ENCODE measurements at regions of chr22 and their contacts with region 1.

Region 1: DNA sequence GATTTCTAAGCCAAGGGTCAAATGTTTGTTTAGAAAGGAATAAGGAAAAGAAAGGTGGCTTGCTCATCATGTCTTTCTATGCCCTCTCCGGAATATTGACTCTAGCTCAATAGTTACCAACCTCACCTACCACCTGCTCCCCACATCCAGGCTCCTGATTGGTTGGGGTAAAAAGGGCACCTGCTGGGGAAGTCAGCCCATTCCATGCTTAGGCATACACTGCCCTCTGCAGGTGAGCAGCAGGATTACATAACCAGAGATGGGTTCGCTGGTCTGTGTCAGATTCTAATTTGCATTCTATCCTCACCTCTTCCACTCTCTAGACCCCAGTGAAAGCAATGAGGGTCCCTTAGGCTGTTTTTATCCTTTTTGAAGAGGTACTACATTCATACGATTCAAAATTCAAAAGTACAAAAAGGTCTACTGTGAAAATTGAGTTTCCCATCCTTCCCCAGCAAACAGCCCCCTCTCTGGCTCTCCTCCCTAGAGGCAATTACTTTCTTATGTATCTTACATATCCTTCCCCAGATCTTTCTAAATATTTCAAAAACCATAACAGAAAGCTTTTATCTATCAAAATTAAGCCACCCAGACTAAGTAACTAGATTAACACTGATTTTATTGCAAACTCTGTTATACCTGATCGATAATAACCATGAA is 98.0 kb upstream of the ASPHD2 start:
- DNase-seq: peak; percentile 81
- H3K4me3 ChIP-seq: no peak overlapping the region; a peak in 1 of 4 replicates
- H3K27ac ChIP-seq: no peak overlapping the region
- H3K4me1 ChIP-seq: peaks cover 0 to 3% of the 10 kb centered on the region in 2 experiments; a peak in 1 of 4 replicates
- H3K27me3 ChIP-seq: no peaks in the 10 kb centered on the region
- CTCF ChIP-seq: peak; percentile 85
- EP300 ChIP-seq: no peak
- RAD21 ChIP-seq: peak; percentile 96

Region 2: GRCh38 chr22:25896098-25896497 is 435.0 kb before region 1 on chr22:
- CTCF ChIA-PET with region 1: interaction called, 15 read pairs
- POLR2A ChIA-PET with region 1: no interaction called
- DNase-seq: no peak
- H3K4me3 ChIP-seq: no peak overlapping the region
- H3K27ac ChIP-seq: no peak overlapping the region
- H3K4me1 ChIP-seq: no peaks in the 10 kb centered on the region
- H3K27me3 ChIP-seq: no peaks in the 10 kb centered on the region
- CTCF ChIP-seq: no peak
- EP300 ChIP-seq: no peak
- RAD21 ChIP-seq: peak; percentile 38; the same call in 1 of the 2 replicates

Region 3: DNA sequence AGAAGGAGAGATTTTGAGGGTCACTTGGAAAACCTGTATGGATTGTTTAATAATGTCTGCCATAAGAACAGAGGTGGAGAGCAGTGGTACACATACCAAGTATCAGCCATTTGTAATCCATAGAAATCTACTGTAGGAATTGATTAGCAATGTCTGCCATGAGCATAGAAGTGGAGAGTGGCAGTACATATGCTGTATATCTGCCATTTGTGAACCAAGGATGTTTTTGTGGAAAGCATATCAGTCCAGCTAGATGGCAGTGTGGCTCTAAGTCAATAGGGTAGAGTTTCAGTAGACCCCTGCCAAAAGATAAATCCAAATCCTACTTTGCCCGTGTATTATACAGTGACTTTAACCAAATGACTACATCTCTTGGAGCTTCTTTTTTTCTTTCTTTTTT is 244.7 kb before region 1 on chr22:
- CTCF ChIA-PET with region 1: interaction called, 17 read pairs
- POLR2A ChIA-PET with region 1: no interaction called
- DNase-seq: peak; percentile 36
- H3K4me3 ChIP-seq: no peak overlapping the region
- H3K27ac ChIP-seq: no peak overlapping the region
- H3K4me1 ChIP-seq: no peaks in the 10 kb centered on the region
- H3K27me3 ChIP-seq: no peaks in the 10 kb centered on the region
- CTCF ChIP-seq: no peak
- EP300 ChIP-seq: no peak
- RAD21 ChIP-seq: peak; percentile 77

Region 4: DNA sequence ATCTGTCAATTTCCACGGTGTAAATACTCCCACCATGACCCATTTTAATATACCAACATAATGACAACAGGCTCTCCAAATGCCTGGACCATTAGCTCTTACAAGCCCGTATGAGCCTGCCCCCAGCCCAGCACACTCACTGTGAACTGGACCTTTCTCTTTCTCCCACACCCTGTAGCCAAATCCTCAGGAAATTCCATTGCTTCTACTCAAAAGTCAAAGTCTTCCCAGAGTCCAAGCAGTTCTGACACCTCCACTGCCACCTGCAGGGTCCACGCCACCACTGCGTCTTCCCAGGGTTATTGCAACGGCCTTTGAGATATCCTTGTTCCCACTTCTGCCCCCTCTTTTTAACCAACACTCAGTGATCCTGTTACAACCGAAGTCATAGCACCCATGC is 12.1 kb before region 1 on chr22:
- CTCF ChIA-PET with region 1: interaction called, 22 read pairs
- POLR2A ChIA-PET with region 1: no interaction called
- DNase-seq: no peak
- H3K4me3 ChIP-seq: no peak overlapping the region; a peak in 1 of 4 replicates
- H3K27ac ChIP-seq: no peak overlapping the region
- H3K4me1 ChIP-seq: peaks cover 2 to 7% of the 10 kb centered on the region in 2 experiments; a peak in 2 of 4 replicates
- H3K27me3 ChIP-seq: no peaks in the 10 kb centered on the region
- CTCF ChIP-seq: no peak
- EP300 ChIP-seq: no peak
- RAD21 ChIP-seq: no peak

Region 5: GRCh38 chr22:26342745-26343410 is 11.8 kb after region 1 on chr22:
- CTCF ChIA-PET with region 1: interaction called, 15 read pairs
- POLR2A ChIA-PET with region 1: no interaction called
- DNase-seq: no peak
- H3K4me3 ChIP-seq: no peak overlapping the region
- H3K27ac ChIP-seq: no peak overlapping the region
- H3K4me1 ChIP-seq: no peaks in the 10 kb centered on the region
- H3K27me3 ChIP-seq: no peaks in the 10 kb centered on the region
- CTCF ChIP-seq: no peak
- EP300 ChIP-seq: no peak
- RAD21 ChIP-seq: no peak